Mammary epithelial cell (primary cell): ENCODE measurements at regions of chr12 and their contacts with region 1.

Region 1: GRCh38 chr12:27332407-27333301 is at the start of gene BMAL2:
- DNase-seq: peak; percentile 40
- H3K4me3 ChIP-seq: peak within 1 kb of the TSS; percentile 66 to 82 (median 80)
- H3K27ac ChIP-seq: peak within 1 kb of the TSS; percentile 98
- H3K4me1 ChIP-seq: peaks cover 46% of the 10 kb centered on the region
- H3K27me3 ChIP-seq: no peaks in the 10 kb centered on the region
- CTCF ChIP-seq: no peak
- total RNA-seq, gene BMAL2: 8.8 to 51.6 TPM

Region 2: DNA sequence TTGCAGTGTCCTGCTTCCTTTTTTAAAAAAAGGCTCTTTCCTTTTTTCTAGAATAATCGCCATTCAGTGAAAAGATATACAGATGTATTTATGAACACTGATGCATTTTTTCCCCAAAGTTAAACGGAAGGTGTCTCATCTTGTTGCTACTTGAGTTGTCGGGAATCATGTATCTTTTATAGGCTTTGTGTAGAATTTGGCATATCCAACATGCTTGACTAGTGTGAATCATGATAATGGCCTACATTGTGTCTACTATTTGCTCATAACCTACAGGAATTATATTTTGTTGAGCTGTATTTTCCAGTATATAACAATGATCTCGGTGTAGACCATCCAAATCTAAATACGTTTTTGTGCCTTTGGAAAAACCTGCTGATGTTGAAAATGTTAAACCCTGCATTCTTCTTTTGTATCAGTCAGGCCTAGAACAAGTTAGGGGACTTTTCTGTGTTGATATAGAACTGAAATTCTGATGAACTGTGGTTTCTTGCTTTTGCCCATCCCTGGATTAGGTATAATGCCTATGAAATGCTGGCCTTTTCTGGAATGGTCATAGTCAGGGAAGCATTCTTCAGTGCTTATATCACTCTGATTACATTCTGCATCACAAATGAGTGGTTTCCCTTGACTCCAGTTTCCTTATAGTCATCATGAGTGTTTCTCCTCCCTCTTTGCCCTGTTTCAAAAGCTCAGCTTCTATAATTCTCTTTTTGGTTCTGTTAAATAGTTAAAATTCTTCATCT is 10.8 kb after region 1 on chr12:
- CTCF ChIA-PET with region 1: no interaction called
- dilution Hi-C with region 1: no loop called
- in situ Hi-C with region 1: no loop called
- intact Hi-C with region 1: loop called (anchors 1 kb)
- DNase-seq: peak; percentile 96
- H3K4me3 ChIP-seq: no peak overlapping the region
- H3K27ac ChIP-seq: peak overlapping the region; percentile 99
- H3K4me1 ChIP-seq: peaks cover 55% of the 10 kb centered on the region
- H3K27me3 ChIP-seq: no peaks in the 10 kb centered on the region
- CTCF ChIP-seq: no peak

Region 3: DNA sequence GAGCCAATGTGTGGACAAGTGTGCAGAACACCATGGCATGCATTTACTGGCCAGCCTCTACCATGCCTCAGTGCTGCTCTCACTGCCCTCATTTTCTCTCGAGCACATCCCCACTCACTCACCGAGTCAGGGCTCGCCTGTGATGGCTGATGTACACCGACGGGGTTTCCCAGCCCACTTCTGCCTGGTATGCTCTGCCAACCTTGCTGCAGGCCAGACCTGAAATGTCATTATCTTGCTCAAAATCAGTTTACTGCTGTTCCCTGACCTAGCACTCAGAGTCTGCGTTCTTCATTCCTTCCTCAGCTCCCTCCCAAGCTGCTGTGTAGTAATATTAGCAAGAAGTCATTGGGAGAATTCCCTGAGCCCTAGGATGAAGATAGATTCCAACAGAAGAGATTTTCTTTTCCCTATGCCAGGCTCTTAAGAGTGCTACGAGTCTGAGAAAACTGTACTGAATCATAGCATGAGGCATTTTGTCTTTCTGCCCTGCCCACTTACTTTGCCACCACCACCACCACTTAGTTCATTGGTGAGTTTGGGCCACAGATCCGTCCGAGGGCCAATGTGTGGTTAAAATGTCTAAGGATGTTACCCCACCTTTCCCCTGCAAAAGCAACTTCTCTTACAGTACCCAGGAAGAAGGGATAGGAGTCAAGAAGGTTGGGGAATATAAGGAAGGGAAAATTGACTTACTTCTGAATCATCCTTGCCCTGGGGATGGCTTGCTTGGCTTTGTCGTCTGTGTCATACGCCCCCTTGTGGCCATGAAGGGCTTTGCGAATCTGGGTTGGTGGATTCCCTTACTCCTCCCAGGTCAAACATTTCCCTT is 51.0 kb after region 1 on chr12:
- CTCF ChIA-PET with region 1: no interaction called
- dilution Hi-C with region 1: no loop called
- in situ Hi-C with region 1: loop called in 1 of 2 experiments (anchors 10 kb)
- intact Hi-C with region 1: loop called (anchors 1 kb)
- DNase-seq: peak; percentile 83
- H3K4me3 ChIP-seq: no peak overlapping the region
- H3K27ac ChIP-seq: peak overlapping the region; percentile 68
- H3K4me1 ChIP-seq: peaks cover 11% of the 10 kb centered on the region
- H3K27me3 ChIP-seq: no peaks in the 10 kb centered on the region
- CTCF ChIP-seq: peak; percentile 94 to 96

Region 4: GRCh38 chr12:27424631-27425230 is 92.1 kb after region 1 on chr12:
- CTCF ChIA-PET with region 1: no interaction called
- dilution Hi-C with region 1: no loop called
- in situ Hi-C with region 1: no loop called
- intact Hi-C with region 1: no loop called
- DNase-seq: peak; percentile 38
- H3K4me3 ChIP-seq: no peak overlapping the region
- H3K27ac ChIP-seq: no peak overlapping the region
- H3K4me1 ChIP-seq: peaks cover 3% of the 10 kb centered on the region
- H3K27me3 ChIP-seq: no peaks in the 10 kb centered on the region
- CTCF ChIP-seq: peak; percentile 56 to 65

Region 5: GRCh38 chr12:27549801-27550652 is 217.4 kb after region 1 on chr12:
- CTCF ChIA-PET with region 1: no interaction called
- dilution Hi-C with region 1: no loop called
- in situ Hi-C with region 1: no loop called
- intact Hi-C with region 1: loop called (anchors 5 kb)
- DNase-seq: peak; percentile 93
- H3K4me3 ChIP-seq: peak overlapping the region; percentile 25 to 28 (median 25)
- H3K27ac ChIP-seq: peak overlapping the region; percentile 95
- H3K4me1 ChIP-seq: peaks cover 83% of the 10 kb centered on the region
- H3K27me3 ChIP-seq: no peaks in the 10 kb centered on the region
- CTCF ChIP-seq: no peak